ENCODE measurements at regions of chr11 and their contacts with region 1.

Region 1: GRCh38 chr11:88543902-88544655 is 206.5 kb upstream of the CTSC start:
- DNase-seq: peak; percentile 89
- H3K4me3 ChIP-seq: no peak overlapping the region
- H3K27ac ChIP-seq: no peak overlapping the region
- H3K4me1 ChIP-seq: peaks cover 0 to 4% (median 0%) of the 10 kb centered on the region in 4 donors
- H3K27me3 ChIP-seq: no peaks in the 10 kb centered on the region
- CTCF ChIP-seq: peak; percentile 87 to 97 (median 94)
- EP300 ChIP-seq: no peak
- POLR2A ChIP-seq: no peak

Region 2: GRCh38 chr11:87352759-87353707 is 1191.0 kb before region 1 on chr11:
- intact Hi-C with region 1: loop called (anchors 2 kb)
- DNase-seq: peak; percentile 88
- H3K4me3 ChIP-seq: no peak overlapping the region
- H3K27ac ChIP-seq: no peak overlapping the region
- H3K4me1 ChIP-seq: peaks cover 0 to 21% (median 11%) of the 10 kb centered on the region in 4 donors
- H3K27me3 ChIP-seq: no peaks in the 10 kb centered on the region
- CTCF ChIP-seq: peak; percentile 93 to 99 (median 98)
- EP300 ChIP-seq: no peak
- POLR2A ChIP-seq: no peak

Region 3: DNA sequence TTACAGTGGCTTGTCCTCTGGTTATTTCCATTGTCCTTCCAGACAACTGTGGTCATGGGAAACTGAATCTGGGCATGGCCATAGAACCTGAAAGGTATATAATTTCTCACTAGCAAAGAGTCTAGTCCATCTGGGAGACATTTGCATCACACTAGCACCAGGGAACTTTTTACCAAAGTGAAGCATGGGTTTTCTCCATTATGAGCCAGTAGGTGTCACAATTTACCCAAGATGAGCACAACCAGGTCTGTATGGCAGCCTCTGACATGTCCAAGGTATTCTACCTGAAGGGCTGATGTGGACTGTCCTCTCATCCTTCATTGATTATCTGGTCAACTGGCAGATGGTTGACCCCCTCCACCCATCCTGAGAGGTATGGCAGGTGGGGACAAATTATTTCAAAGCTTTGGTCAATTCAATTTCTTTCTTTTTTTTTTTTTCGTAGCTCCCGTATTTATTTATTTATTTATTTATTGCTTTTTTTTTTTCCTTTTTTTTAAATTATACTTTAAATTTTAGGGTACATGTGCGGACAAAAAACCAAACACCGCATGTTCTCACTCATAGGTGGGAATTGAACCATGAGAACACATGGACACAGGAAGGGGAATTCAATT is 1080.5 kb before region 1 on chr11:
- intact Hi-C with region 1: loop called (anchors 10 kb)
- DNase-seq: no peak
- H3K4me3 ChIP-seq: no peak overlapping the region
- H3K27ac ChIP-seq: no peak overlapping the region
- H3K4me1 ChIP-seq: peaks cover 0 to 25% (median 19%) of the 10 kb centered on the region in 4 donors
- H3K27me3 ChIP-seq: no peaks in the 10 kb centered on the region
- CTCF ChIP-seq: peak in 1 of 4 experiments; percentile 19
- EP300 ChIP-seq: no peak
- POLR2A ChIP-seq: no peak

Region 4: GRCh38 chr11:88016392-88017170 is 527.5 kb before region 1 on chr11:
- intact Hi-C with region 1: loop called (anchors 1 kb)
- DNase-seq: peak; percentile 83
- H3K4me3 ChIP-seq: no peak overlapping the region
- H3K27ac ChIP-seq: no peak overlapping the region
- H3K4me1 ChIP-seq: no peaks in the 10 kb centered on the region
- H3K27me3 ChIP-seq: no peaks in the 10 kb centered on the region
- CTCF ChIP-seq: peak; percentile 47 to 76 (median 60)
- EP300 ChIP-seq: no peak
- POLR2A ChIP-seq: no peak

Region 5: GRCh38 chr11:88292171-88292843 is 251.8 kb before region 1 on chr11:
- intact Hi-C with region 1: loop called (anchors 10 kb)
- DNase-seq: no peak
- H3K4me3 ChIP-seq: no peak overlapping the region
- H3K27ac ChIP-seq: peak overlapping the region in 3 of 4 donors; percentile 1 to 15 (median 14)
- H3K4me1 ChIP-seq: peaks cover 0 to 21% (median 18%) of the 10 kb centered on the region in 4 donors
- H3K27me3 ChIP-seq: no peaks in the 10 kb centered on the region
- CTCF ChIP-seq: no peak
- EP300 ChIP-seq: peak in 1 of 4 donors; percentile 6
- POLR2A ChIP-seq: no peak

Region 6: DNA sequence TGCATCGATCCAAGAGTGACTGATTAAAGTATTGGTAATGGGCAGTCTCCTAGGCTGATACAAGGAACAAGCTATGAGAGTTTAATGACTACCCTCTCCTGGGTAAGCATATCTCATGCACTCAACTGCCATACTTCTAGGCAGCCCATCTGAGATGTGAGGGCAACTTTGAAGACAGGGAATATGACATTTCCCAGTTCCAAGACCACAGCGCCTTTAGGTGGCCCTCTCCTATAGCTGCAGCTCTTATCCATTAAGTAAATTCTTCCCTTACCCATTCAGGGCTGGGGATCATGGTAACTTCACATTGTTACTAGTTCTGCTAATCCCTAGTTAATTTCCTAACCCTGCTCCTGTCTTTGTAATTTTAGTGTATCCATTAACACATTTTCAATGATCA is 49.2 kb before region 1 on chr11:
- intact Hi-C with region 1: no loop called
- DNase-seq: no peak
- H3K4me3 ChIP-seq: no peak overlapping the region
- H3K27ac ChIP-seq: no peak overlapping the region
- H3K4me1 ChIP-seq: no peaks in the 10 kb centered on the region
- H3K27me3 ChIP-seq: no peaks in the 10 kb centered on the region
- CTCF ChIP-seq: no peak
- EP300 ChIP-seq: no peak
- POLR2A ChIP-seq: no peak